ENCODE measurements at regions of chr1 and their contacts with region 1.

Region 1: GRCh38 chr1:154329551-154330131 is 4.3 kb downstream of the ATP8B2 start:
- H3K4me3 Mint-ChIP-seq: no peak overlapping the region
- H3K27ac Mint-ChIP-seq: no peak overlapping the region
- H3K4me1 Mint-ChIP-seq: peaks cover 77% of the 10 kb centered on the region
- H3K27me3 Mint-ChIP-seq: peaks cover 44% of the 10 kb centered on the region

Region 2: GRCh38 chr1:154198756-154199562 is 130.7 kb before region 1 on chr1:
- intact Hi-C with region 1: loop called (anchors 5 kb)
- H3K4me3 Mint-ChIP-seq: no peak overlapping the region
- H3K27ac Mint-ChIP-seq: no peak overlapping the region
- H3K4me1 Mint-ChIP-seq: peaks cover 14% of the 10 kb centered on the region
- H3K27me3 Mint-ChIP-seq: peaks cover 3% of the 10 kb centered on the region

Region 3: DNA sequence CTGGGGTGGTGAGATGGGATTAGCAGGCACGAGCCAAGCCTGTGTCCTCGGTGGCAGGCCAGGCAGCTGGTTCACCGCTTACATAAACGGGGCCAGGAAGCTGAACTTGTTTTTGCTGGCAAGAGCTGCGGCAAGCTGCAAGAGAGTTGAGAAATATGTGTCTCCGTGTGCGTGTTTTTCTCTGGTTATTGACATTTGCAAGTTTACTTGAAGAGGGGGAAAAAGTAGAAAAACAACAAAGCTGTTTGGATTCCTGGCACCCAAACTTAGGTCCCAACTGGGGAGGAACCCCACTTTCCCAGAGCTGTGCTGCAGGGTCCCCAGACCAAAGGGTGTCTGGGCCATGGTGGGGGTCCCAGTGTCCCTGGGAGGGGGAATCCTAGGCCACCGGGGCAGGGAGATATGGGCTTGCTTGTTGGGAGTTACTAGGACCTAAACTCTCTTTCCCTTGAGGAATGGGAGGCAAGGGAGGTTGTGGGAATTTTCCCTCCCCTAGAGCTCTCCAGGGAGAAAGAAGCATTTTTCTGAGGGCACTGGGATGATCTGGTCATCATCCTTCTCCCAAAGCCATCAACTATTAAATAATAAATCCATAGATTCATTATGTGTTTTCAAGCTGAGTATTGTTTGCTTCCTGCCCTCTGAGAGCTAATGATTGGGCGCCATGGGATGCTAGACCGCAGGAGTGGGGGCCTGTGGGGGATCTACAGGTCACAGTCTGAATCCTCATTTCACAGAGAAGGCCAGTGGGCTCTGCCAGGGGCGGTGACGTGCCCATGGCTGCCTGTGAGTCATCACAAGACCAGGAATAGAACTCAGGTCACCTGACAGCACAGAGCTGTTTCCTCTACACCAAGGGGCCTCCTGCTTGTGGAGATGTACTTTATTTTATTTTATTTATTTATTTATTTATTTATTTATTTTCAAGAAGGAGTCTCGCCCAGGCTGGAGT is 90.3 kb after region 1 on chr1:
- intact Hi-C with region 1: no loop called
- H3K4me3 Mint-ChIP-seq: peak overlapping the region; percentile 52
- H3K27ac Mint-ChIP-seq: peak overlapping the region; percentile 86
- H3K4me1 Mint-ChIP-seq: peaks cover 96% of the 10 kb centered on the region
- H3K27me3 Mint-ChIP-seq: no peaks in the 10 kb centered on the region

Region 4: DNA sequence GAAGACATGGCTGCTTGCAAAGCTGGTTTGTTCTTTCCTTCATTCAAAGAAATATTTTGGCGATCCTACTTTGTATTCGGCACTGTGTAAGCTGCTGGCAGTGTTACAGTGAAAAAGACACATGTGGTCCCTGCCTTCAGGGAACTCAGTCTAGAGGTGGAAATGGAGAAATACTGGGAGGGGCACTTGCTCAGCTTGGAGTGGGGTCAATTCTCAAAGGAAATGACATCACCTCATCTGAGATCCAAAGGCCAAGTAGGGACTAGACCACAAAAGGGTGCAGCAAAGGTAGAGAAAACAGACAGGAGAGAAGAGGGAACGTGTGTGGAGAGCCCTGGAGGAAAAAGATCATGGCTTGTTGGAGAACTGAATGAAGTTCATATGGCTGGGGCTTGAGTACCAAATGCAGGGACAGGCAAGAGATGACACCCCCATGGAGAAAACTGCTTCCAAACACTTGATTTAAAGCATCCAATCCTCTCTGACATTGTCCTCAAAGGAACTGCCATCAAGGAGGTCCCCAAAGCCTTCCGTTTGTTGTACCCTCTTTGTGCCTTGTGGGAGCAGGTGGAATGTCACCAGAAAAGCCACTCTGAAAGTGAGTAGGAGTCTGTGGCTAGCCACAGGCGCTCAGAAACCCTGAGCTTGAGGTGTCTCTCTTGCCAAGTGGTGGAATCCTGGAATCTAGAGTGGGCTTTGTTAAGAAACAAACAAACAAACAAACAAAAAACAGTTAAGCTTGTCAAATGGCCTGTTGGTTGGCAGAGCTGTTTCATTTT is 124.1 kb after region 1 on chr1:
- intact Hi-C with region 1: no loop called
- H3K4me3 Mint-ChIP-seq: no peak overlapping the region
- H3K27ac Mint-ChIP-seq: peak overlapping the region; percentile 81
- H3K4me1 Mint-ChIP-seq: peaks cover 58% of the 10 kb centered on the region
- H3K27me3 Mint-ChIP-seq: no peaks in the 10 kb centered on the region

Region 5: GRCh38 chr1:154493276-154493675 is 163.6 kb after region 1 on chr1:
- intact Hi-C with region 1: no loop called
- H3K4me3 Mint-ChIP-seq: peak overlapping the region; percentile 36
- H3K27ac Mint-ChIP-seq: peak overlapping the region; percentile 85
- H3K4me1 Mint-ChIP-seq: peaks cover 51% of the 10 kb centered on the region
- H3K27me3 Mint-ChIP-seq: peaks cover 2% of the 10 kb centered on the region

Region 6: GRCh38 chr1:154791292-154792166 is 461.9 kb after region 1 on chr1:
- intact Hi-C with region 1: no loop called
- H3K4me3 Mint-ChIP-seq: no peak overlapping the region
- H3K27ac Mint-ChIP-seq: no peak overlapping the region
- H3K4me1 Mint-ChIP-seq: peaks cover 9% of the 10 kb centered on the region
- H3K27me3 Mint-ChIP-seq: peaks cover 39% of the 10 kb centered on the region

Measured in dendritic cell treated with granulocyte-macrophage colony-stimulating factor and Interleukin-4, amounts not matched to agents 40 ng/mL and 50 ng/mL, for 4 days (primary cell).